ENCODE measurements at regions of chr6 and their contacts with region 1.

Region 1: DNA sequence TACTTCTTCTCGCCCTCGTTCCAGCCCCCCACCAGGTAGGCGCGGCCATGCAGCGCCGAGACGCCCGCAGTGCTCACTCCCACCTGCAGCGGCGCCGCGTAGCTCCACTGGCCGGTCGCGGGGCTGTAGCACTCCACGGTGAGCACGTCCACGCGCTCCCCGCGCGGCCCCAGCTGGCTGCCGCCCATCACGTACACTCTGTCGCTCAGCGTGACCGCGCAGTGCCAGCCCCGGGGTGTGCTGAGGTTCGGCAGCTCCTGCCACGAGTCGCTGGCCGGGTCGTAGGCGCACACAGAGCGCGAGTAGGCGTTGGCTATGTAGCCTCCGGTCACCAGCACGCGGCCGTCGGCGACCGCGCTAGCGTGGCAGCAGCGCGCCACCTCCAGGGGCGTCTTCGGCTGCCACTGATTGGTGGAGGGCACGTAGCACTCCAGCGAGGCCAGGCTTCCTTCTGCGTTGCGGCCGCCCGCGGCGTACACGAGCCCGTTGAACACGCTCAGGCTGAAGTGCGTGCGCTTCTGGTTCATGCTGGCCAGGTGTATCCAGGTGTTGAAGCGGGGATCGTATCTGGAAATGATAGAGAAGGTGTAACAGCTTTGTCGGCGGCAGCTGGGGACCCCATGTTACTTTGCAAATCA is 13.7 kb downstream of the KLHL31 start:
- DNase-seq: peak; percentile 86
- H3K4me3 ChIP-seq: peak overlapping the region; percentile 71
- H3K27ac ChIP-seq: peak overlapping the region; percentile 71
- H3K4me1 ChIP-seq: no peaks in the 10 kb centered on the region
- H3K27me3 ChIP-seq: no peaks in the 10 kb centered on the region
- CTCF ChIP-seq: peak; percentile 32

Region 2: GRCh38 chr6:53544470-53545308 is 107.2 kb before region 1 on chr6 and contains the start of gene GCLC:
- intact Hi-C with region 1: loop called (anchors 2 kb)
- DNase-seq: peak; percentile 95
- H3K4me3 ChIP-seq: peak within 1 kb of the TSS; percentile 77
- H3K27ac ChIP-seq: peak within 1 kb of the TSS; percentile 95
- H3K4me1 ChIP-seq: peaks cover 6% of the 10 kb centered on the region
- H3K27me3 ChIP-seq: no peaks in the 10 kb centered on the region
- CTCF ChIP-seq: peak; percentile 61
- total RNA-seq, gene GCLC: 35.0 to 37.1 TPM

Region 3: DNA sequence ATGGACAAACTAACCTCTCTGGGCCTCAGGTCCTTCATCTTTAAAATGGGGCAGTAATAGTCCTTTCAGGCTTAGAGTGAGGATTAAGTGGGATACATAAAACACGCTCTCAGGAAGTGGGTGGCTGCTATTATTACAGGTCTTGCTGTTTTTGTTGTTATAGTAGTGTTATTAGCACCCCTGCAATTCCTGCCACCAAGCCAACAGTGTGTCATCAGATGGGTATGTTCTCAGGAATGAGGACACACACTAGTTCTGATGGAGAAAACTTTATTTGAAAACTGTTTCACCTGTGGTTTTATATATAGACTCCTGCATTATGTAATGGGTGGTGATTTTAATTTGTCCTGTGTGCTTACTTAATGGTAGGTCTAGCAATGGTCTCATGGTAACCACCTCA is 274.6 kb after region 1 on chr6:
- intact Hi-C with region 1: no loop called
- DNase-seq: no peak
- H3K4me3 ChIP-seq: no peak overlapping the region
- H3K27ac ChIP-seq: no peak overlapping the region
- H3K4me1 ChIP-seq: peaks cover 13% of the 10 kb centered on the region
- H3K27me3 ChIP-seq: no peaks in the 10 kb centered on the region
- CTCF ChIP-seq: no peak

Measured in colonic mucosa (tissue), 4 donors.